ENCODE measurements at regions of chr5 and their contacts with region 1.

Region 1: DNA sequence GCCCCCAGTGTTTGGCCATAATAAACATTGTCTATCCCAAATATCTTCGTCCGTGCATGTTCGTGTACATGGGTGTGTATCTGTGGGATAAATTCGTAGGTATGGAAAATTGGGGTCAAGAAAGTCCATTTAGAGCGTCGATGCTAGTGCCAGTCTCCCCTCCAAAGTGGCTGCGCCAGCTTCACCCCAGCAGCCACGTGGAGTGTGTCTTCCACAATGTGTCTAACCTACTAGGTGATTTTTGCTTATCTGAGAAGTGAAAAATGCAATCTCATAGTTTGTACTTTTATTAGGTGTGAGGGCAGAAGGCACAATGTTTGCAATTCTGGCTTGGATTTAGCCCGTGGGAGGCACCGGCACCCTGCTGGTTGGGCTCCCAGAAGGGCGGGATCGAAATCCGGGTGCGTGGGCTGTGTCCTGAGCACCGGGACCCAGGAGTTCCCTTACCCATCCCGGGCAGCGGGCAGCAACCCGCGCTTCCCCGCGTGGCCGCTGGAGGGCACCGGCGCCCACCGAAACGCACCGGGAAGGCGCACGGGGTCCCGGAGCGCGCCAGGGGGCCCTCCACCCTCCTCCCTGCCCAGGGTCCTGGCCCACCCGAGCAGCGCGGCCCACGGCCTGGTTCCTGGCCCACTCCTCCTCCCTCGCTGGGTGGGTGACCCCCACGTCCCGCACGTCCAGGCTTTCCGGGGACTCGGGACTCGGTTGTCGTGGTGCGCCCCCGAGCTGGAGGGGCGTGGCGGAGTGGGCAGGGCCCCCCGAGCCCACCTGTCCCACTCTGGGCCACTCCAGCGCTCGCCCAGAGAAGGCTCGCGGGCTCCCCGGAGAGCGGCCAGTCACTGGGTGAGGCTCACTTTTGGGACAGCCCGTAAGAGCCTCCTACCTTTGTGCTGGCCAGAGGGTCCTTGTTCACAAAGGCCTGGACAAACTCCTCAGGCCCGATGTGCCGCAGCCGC is 55.4 kb upstream of the RNF130 start:
- DNase-seq: no peak
- H3K4me3 Mint-ChIP-seq: no peak overlapping the region
- H3K27ac Mint-ChIP-seq: no peak overlapping the region
- H3K4me1 Mint-ChIP-seq: no peaks in the 10 kb centered on the region
- H3K27me3 Mint-ChIP-seq: peaks cover 4% of the 10 kb centered on the region

Region 2: GRCh38 chr5:179763215-179763945 is 363.6 kb before region 1 on chr5:
- intact Hi-C with region 1: no loop called
- DNase-seq: peak; percentile 11
- H3K4me3 Mint-ChIP-seq: no peak overlapping the region
- H3K27ac Mint-ChIP-seq: no peak overlapping the region
- H3K4me1 Mint-ChIP-seq: peaks cover 51% of the 10 kb centered on the region
- H3K27me3 Mint-ChIP-seq: no peaks in the 10 kb centered on the region

Region 3: DNA sequence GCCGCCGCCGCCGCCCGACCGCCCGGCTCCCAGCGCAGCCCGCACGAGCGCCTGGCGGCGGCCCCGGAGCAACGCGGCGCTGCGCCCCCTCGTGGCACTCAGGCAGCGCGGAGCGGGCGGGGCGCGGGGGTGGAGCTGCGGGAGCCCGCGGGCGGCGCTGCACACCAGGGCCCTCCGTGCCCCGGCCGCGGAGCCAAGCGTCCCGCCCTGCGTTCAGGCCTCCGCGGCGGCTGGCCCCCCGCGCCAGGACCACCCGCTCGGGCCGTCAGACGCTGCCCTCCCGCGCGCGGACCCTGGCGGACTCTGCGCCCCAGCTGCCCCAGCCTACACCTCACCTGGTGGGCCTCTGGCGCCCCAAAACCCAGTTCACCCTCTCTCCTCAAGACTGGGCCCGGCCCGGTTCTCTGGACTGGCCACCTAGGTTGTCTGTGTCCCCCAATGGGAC is 82.2 kb after region 1 on chr5 and contains the start of gene RASGEF1C:
- intact Hi-C with region 1: loop called (anchors 2 kb)
- DNase-seq: peak; percentile 50
- H3K4me3 Mint-ChIP-seq: peak within 1 kb of the TSS; percentile 45
- H3K27ac Mint-ChIP-seq: no peak within 1 kb of the TSS
- H3K4me1 Mint-ChIP-seq: peaks cover 9% of the 10 kb centered on the region
- H3K27me3 Mint-ChIP-seq: peaks cover 26% of the 10 kb centered on the region
- total RNA-seq, gene RASGEF1C: not detected in 2 replicates

Region 4: DNA sequence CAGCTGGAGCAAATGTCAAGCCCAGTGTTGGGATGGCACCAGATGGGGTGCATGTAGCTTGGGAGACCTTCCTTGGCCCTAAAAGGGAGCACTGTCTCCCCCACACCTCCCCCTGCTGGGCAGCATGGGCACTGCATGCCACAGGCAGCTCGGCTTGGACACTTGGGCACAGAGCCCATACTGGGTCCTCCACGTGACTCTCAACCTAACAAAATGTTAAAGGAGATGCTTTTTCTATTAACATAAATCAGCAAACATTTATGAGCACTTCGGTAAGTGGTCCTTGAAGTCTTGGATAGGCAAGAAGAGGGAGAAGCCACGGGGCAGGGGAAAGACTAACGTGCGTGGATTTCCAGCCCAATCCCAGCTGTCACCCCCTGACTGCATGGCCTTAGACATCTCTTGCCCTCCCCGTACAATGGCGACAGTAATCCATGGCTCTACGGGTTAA is 188.8 kb after region 1 on chr5:
- intact Hi-C with region 1: loop called (anchors 1 kb)
- DNase-seq: peak; percentile 55
- H3K4me3 Mint-ChIP-seq: no peak overlapping the region
- H3K27ac Mint-ChIP-seq: no peak overlapping the region
- H3K4me1 Mint-ChIP-seq: no peaks in the 10 kb centered on the region
- H3K27me3 Mint-ChIP-seq: no peaks in the 10 kb centered on the region

Measured in activated T-helper 1 cell treated with anti-CD3 and anti-CD28 coated beads, Interleukin-12 subunit alpha, Interleukin-12 subunit beta, Interleukin-2, Interleukin-4 antibody, amounts not matched to agents 30 ng/mL and 10 ng/mL and 1 ng/mL, durations not matched to agents 14 hours and 24 hours and 36 hours (primary cell).